ENCODE measurements at regions of chr9 and their contacts with region 1.

Region 1: DNA sequence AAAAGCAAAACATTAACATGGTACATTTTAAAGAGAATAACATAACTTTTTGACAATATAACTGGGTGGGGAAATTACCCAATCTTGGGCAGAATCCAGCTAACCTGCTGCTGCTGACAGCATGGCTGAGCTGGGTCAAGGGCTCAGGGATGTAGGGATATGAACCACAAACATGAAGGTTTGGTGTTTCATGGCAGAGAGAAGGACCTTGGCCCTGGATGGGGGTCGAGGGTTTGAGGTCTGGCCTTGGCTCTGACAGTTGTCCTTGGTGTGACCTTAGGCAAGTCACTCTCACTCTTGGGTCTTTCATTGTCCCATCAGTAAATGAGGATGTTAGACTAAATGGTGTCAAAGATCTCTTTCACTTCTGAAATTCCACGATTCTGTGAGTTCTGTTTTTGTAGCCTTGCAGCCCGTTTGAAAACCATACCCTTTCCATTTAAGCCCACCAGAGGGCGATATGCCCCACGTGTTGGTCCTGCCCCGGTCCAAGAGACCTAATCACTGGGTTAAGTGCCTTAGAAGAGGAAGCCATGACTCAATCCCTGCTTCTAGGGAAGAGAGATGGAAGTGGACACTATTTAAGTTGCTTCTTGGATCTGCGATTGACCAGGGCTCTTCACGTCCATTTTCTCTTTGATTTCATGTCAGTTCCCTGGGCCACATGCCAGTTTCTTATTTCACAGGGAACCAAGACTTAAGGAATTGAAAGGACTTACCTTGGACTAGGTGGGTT is 56.8 kb upstream of the TEX48 start:
- DNase-seq: peak; percentile 54
- ATAC-seq: peak; percentile 91

Region 2: DNA sequence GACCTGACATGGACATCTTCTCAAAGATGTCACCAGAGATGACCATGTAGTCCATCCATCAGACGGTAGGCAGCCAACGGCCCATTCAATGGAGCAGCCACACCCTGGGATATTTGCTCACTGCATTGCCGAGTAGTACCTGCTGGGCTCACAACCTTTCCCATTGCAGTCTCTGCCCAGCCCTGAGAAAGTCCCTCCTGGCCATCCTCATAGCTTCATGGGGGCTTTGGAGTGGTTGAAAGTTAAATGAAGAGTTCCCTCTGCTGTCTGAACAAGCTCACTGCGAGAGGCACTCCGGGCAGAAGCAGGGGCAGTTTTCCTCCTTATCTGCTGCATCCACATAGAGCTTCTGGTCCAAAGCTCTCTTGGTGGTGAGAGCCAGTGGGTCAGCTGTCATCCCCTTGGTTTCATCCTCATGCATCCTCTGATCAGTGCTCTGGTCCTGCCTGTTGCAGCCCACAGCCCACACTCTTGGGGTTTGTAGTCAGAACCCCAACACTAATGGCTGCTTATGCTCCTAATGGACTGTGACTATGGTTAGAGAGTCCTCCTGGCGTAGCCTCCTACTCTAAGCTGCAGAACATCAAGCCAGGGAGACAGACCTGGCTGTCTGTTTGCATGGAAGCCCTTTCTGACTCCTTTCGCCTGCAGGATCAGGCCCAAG is 168.3 kb after region 1 on chr9:
- intact Hi-C with region 1: loop called (anchors 5 kb)
- DNase-seq: no peak
- ATAC-seq: no peak

Region 3: DNA sequence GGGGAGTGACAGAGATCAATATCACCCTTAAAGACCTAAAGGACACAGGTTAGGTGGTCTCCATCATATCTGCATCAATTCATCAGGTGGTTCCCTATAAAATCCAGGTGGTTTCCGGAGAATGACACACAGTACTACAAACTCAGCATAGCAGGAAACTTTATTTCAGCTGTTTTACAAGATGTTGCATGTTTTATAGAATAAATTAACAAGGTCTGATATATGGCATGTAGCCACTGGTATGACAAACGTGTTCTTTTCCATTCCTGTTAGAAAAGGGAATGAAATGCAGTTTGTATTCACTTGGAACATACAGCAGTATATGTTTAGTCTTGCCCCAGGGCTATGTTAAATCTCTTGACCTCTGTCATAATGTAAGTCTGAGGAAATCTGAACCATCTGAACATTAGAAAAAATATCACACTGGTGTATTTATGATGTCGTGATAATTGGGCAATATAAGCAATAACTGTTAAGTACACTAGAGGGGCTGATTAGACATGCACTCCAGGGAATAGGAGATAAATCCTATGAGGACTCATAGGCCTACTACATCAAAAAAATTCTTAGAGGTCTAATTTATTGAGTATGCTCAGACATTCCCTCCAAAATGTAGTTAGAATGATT is 233.9 kb after region 1 on chr9:
- intact Hi-C with region 1: no loop called
- DNase-seq: no peak
- ATAC-seq: no peak